ENCODE measurements at regions of chr4 and their contacts with region 1.

Region 1: GRCh38 chr4:151990201-151990600 is 229.4 kb upstream of the GATB start:
- DNase-seq: peak; percentile 95
- ATAC-seq: peak; percentile 91
- H3K4me3 ChIP-seq: peak overlapping the region; percentile 41
- H3K27ac ChIP-seq: peak overlapping the region; percentile 97
- H3K4me1 ChIP-seq: peaks cover 23% of the 10 kb centered on the region
- H3K27me3 ChIP-seq: no peaks in the 10 kb centered on the region
- CTCF ChIP-seq: no peak

Region 2: DNA sequence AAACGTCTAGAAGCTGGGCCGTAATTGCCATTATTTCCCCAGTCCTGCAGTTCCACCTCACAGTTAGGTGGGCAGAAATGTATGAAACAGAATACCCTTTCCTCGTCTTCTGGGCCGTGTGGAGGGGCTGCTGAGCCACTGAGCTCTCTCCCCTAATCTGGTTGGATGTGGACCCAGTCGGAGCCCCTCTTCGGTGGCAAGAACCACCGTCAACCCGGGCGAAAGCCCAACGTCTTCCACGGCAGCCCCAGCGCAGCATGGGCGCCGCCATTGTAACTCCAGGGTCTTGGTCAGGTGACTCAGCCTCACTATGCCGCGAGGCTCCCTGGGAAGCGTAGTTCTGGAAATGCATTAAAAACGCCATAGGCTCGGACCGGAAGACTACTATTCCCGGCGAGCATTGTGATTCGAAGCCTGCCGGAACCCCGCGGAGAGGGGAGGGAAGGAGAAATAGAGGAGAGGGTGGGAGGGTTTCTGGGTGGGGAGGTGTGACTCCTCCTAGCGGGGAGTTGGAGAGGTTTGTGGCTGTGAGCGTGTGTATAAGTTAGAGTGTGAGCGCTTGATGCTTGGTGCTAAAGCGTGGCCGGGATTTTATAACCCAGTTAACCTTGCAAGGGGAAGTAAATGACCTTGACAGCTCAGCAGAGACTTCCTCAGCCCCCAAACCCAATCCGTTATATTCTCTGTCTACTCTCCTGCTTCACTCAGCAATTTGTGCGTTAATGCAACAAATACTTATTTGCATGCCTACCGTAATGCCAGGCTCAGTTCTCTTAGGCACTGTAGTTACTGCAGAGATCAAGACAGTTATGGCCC is 229.3 kb before region 1 on chr4 and contains the start of gene GATB:
- CTCF ChIA-PET with region 1: no interaction called
- POLR2A ChIA-PET with region 1: no interaction called
- intact Hi-C with region 1: loop called (anchors 5 kb)
- DNase-seq: peak; percentile 94
- ATAC-seq: peak; percentile 99
- H3K4me3 ChIP-seq: peak within 1 kb of the TSS; percentile 96
- H3K27ac ChIP-seq: peak within 1 kb of the TSS; percentile 34; the same call in 1 of the 2 replicates
- H3K4me1 ChIP-seq: peaks cover 3% of the 10 kb centered on the region; the same call in 1 of the 2 replicates
- H3K27me3 ChIP-seq: no peaks in the 10 kb centered on the region
- CTCF ChIP-seq: peak; percentile 44
- total RNA-seq, gene GATB: 20.4 and 22.7 TPM in 2 replicates

Region 3: GRCh38 chr4:151948351-151949016 is 41.7 kb before region 1 on chr4:
- CTCF ChIA-PET with region 1: no interaction called
- POLR2A ChIA-PET with region 1: no interaction called
- intact Hi-C with region 1: loop called (anchors 2 kb)
- DNase-seq: peak; percentile 86
- ATAC-seq: peak; percentile 88
- H3K4me3 ChIP-seq: no peak overlapping the region
- H3K27ac ChIP-seq: peak overlapping the region; percentile 95
- H3K4me1 ChIP-seq: peaks cover 26% of the 10 kb centered on the region
- H3K27me3 ChIP-seq: no peaks in the 10 kb centered on the region
- CTCF ChIP-seq: no peak

Region 4: GRCh38 chr4:152094970-152095700 is 104.9 kb after region 1 on chr4:
- CTCF ChIA-PET with region 1: no interaction called
- POLR2A ChIA-PET with region 1: no interaction called
- intact Hi-C with region 1: loop called (anchors 1 kb)
- DNase-seq: peak; percentile 56
- ATAC-seq: peak; percentile 79
- H3K4me3 ChIP-seq: no peak overlapping the region
- H3K27ac ChIP-seq: peak overlapping the region; percentile 71
- H3K4me1 ChIP-seq: peaks cover 26% of the 10 kb centered on the region
- H3K27me3 ChIP-seq: no peaks in the 10 kb centered on the region
- CTCF ChIP-seq: no peak